Activated CD4-positive, alpha-beta T cell treated with anti-CD3 and anti-CD28 coated beads for 36 hours (primary cell): ENCODE measurements at regions of chr14 and their contacts with region 1.

Region 1: GRCh38 chr14:61456720-61457119 is 135.3 kb downstream of the PRKCH start:
- DNase-seq: peak; percentile 91
- ATAC-seq: peak; percentile 36
- H3K4me3 Mint-ChIP-seq: no peak overlapping the region
- H3K27ac Mint-ChIP-seq: peak overlapping the region; percentile 81
- H3K4me1 Mint-ChIP-seq: peaks cover 85% of the 10 kb centered on the region
- H3K27me3 Mint-ChIP-seq: no peaks in the 10 kb centered on the region

Region 2: GRCh38 chr14:61125867-61126572 is 330.7 kb before region 1 on chr14:
- CTCF ChIA-PET with region 1: no interaction called
- POLR2A ChIA-PET with region 1: no interaction called
- intact Hi-C with region 1: no loop called
- DNase-seq: no peak
- ATAC-seq: no peak
- H3K4me3 Mint-ChIP-seq: no peak overlapping the region
- H3K27ac Mint-ChIP-seq: no peak overlapping the region
- H3K4me1 Mint-ChIP-seq: no peaks in the 10 kb centered on the region
- H3K27me3 Mint-ChIP-seq: peaks cover 13% of the 10 kb centered on the region

Region 3: DNA sequence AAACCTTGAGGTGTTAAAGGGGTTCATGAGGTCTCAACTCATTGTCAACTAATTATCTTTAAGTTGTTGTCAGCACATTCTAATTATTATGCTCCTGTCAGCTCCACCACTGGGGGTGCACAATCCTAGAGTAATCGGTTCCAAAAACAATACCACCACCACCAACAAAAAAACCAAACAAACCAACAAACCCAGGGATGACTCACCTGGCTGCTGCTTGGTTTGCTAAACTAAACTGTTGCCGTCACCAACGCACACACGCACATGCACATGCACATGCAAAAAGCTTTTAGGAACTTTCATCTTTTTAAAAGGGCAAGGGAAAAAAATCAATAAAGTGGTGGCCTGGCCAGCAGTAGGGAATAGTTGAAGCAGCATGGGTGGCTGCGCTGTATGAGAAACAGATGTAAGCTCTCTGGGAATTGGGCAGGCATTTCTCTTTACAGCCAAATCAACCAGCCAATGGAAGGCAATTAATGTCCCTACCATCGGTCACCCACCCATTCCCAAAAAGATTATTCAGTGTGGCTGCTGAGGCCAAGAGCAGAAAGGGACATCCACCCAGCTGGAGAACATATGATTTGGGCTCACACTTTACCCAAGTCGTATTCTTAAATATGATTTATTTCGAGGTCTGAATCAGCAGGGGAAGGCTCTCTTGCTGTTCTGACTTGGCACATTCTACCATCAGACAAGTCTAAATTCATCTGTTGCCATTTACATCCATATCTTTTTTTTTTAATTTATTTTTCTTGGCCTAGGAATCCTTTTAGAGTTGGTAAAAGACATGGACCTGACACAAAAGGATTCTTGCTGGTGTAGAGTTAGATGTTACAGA is 195.6 kb before region 1 on chr14:
- CTCF ChIA-PET with region 1: no interaction called
- POLR2A ChIA-PET with region 1: no interaction called
- intact Hi-C with region 1: no loop called
- DNase-seq: no peak
- ATAC-seq: no peak
- H3K4me3 Mint-ChIP-seq: no peak overlapping the region
- H3K27ac Mint-ChIP-seq: no peak overlapping the region
- H3K4me1 Mint-ChIP-seq: no peaks in the 10 kb centered on the region
- H3K27me3 Mint-ChIP-seq: peaks cover 23% of the 10 kb centered on the region

Region 4: DNA sequence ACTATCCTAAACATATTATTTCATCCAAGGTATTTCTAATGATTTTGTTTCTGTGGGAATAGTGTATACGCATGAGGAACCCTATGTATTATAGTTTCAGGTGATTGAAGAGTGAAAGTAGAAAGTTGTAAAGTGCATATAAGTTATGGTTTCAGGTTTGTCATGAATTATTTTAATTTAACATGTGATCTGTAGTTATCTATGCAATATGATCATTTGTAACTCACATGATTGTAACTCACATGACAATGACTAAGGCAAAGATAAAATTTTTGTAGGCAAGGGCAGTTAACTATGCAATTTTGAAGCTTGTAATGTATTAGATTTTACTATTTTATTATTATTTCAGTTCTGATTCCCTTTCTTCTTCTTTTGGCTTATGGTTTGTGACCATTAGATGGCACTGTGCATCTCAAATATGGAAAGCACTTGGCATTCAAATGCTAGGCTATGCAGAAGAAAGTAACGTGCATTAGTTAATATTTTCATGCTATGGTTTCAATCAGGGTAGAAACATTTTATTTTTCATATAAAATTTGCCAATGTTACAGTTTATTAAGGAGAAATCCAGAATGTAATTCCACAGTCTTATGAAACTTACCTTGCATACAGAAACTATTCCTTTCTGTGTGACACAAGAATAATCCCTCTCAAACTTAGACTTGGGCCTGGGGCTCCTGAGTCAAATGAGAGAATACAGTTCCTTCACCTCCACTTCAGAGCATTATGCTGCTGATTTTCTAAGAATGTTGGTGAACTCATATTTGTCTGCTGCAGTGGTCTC is 159.8 kb before region 1 on chr14:
- CTCF ChIA-PET with region 1: interaction called, 7 read pairs
- POLR2A ChIA-PET with region 1: no interaction called
- intact Hi-C with region 1: loop called (anchors 2 kb)
- DNase-seq: no peak
- ATAC-seq: peak; percentile 67
- H3K4me3 Mint-ChIP-seq: no peak overlapping the region
- H3K27ac Mint-ChIP-seq: peak overlapping the region; percentile 29
- H3K4me1 Mint-ChIP-seq: peaks cover 54% of the 10 kb centered on the region
- H3K27me3 Mint-ChIP-seq: no peaks in the 10 kb centered on the region

Region 5: GRCh38 chr14:61321385-61322010 is 135.2 kb before region 1 on chr14 and contains the start of gene PRKCH:
- CTCF ChIA-PET with region 1: interaction called, 4 read pairs
- POLR2A ChIA-PET with region 1: no interaction called
- intact Hi-C with region 1: loop called (anchors 2 kb)
- DNase-seq: peak; percentile 90
- ATAC-seq: peak; percentile 63
- H3K4me3 Mint-ChIP-seq: peak within 1 kb of the TSS; percentile 92
- H3K27ac Mint-ChIP-seq: peak within 1 kb of the TSS; percentile 94
- H3K4me1 Mint-ChIP-seq: peaks cover 26% of the 10 kb centered on the region
- H3K27me3 Mint-ChIP-seq: no peaks in the 10 kb centered on the region
- total RNA-seq, gene PRKCH: 109 to 145 TPM

Region 6: GRCh38 chr14:61342486-61342885 is 114.2 kb before region 1 on chr14:
- CTCF ChIA-PET with region 1: no interaction called
- POLR2A ChIA-PET with region 1: no interaction called
- intact Hi-C with region 1: loop called (anchors 5 kb)
- DNase-seq: peak; percentile 91
- ATAC-seq: peak; percentile 60
- H3K4me3 Mint-ChIP-seq: peak overlapping the region; percentile 86
- H3K27ac Mint-ChIP-seq: peak overlapping the region; percentile 99
- H3K4me1 Mint-ChIP-seq: peaks cover 94% of the 10 kb centered on the region
- H3K27me3 Mint-ChIP-seq: no peaks in the 10 kb centered on the region

Region 7: DNA sequence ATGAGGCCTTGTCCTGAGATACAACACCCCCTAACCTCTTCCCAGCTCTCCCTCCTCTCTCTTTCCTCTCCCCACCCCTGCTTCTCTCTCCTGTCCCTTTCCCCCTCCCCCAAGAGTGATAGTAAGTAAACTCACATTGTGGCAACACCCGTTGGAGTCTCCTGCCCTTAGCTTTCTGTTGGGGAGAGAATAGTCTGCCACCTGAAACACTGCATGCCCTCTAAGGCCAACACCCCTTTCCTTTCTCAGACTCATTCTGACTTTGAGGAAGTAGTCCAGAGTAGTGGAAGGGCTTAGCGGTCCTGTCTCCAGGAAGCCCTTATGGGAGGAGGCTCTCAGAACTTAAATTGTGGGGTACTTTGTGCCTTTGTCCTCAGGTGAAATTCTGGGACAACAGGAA is 40.1 kb before region 1 on chr14:
- CTCF ChIA-PET with region 1: no interaction called
- POLR2A ChIA-PET with region 1: no interaction called
- intact Hi-C with region 1: no loop called
- DNase-seq: no peak
- ATAC-seq: peak; percentile 27
- H3K4me3 Mint-ChIP-seq: peak overlapping the region; percentile 15
- H3K27ac Mint-ChIP-seq: peak overlapping the region; percentile 86
- H3K4me1 Mint-ChIP-seq: no peaks in the 10 kb centered on the region
- H3K27me3 Mint-ChIP-seq: no peaks in the 10 kb centered on the region

Region 8: GRCh38 chr14:61438860-61439684 is 17.6 kb before region 1 on chr14:
- CTCF ChIA-PET with region 1: interaction called, 18 read pairs
- POLR2A ChIA-PET with region 1: no interaction called
- intact Hi-C with region 1: no loop called
- DNase-seq: peak; percentile 63
- ATAC-seq: peak; percentile 54
- H3K4me3 Mint-ChIP-seq: peak overlapping the region; percentile 68
- H3K27ac Mint-ChIP-seq: peak overlapping the region; percentile 87
- H3K4me1 Mint-ChIP-seq: peaks cover 92% of the 10 kb centered on the region
- H3K27me3 Mint-ChIP-seq: no peaks in the 10 kb centered on the region

Region 9: GRCh38 chr14:62301911-62302310 is 845.2 kb after region 1 on chr14:
- CTCF ChIA-PET with region 1: no interaction called
- POLR2A ChIA-PET with region 1: no interaction called
- intact Hi-C with region 1: no loop called
- DNase-seq: no peak
- ATAC-seq: no peak
- H3K4me3 Mint-ChIP-seq: no peak overlapping the region
- H3K27ac Mint-ChIP-seq: no peak overlapping the region
- H3K4me1 Mint-ChIP-seq: no peaks in the 10 kb centered on the region
- H3K27me3 Mint-ChIP-seq: peaks cover 5% of the 10 kb centered on the region